ENCODE measurements at regions of chr2 and their contacts with region 1.

Region 1: GRCh38 chr2:47189635-47190034 is 34.5 kb upstream of the STPG4 start:
- DNase-seq: no peak
- H3K4me3 ChIP-seq: no peak overlapping the region
- H3K27ac ChIP-seq: peak overlapping the region in 1 of 5 donors; percentile 20
- H3K4me1 ChIP-seq: peaks cover 0 to 15% of the 10 kb centered on the region in 2 donors
- H3K27me3 ChIP-seq: no peaks in the 10 kb centered on the region
- CTCF ChIP-seq: no peak
- POLR2A ChIP-seq: no peak

Region 2: DNA sequence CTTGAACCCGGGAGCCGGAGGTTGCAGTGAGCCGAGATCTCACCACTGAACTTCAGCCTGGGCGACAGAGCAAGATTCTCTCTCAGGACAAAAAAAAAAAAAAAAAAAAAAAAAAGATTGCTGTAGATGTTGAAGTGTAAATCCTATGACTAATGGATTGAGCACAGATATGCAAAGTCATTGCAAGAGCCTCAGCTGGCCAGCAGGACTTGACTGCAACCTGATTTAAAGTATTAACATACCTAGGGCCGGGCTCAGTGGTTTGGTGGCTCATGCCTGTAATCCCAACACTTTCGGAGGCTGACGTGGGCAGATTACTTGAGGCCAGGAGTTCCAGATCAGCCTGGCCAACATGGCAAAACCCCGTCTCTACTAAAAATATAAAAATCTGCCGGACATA is 109.9 kb after region 1 on chr2:
- intact Hi-C with region 1: no loop called
- DNase-seq: peak in 4 of 7 donors; percentile 25 to 45 (median 39)
- H3K4me3 ChIP-seq: no peak overlapping the region
- H3K27ac ChIP-seq: no peak overlapping the region
- H3K4me1 ChIP-seq: peaks cover 0 to 12% of the 10 kb centered on the region in 2 donors
- H3K27me3 ChIP-seq: no peaks in the 10 kb centered on the region
- CTCF ChIP-seq: no peak
- POLR2A ChIP-seq: no peak

Region 3: DNA sequence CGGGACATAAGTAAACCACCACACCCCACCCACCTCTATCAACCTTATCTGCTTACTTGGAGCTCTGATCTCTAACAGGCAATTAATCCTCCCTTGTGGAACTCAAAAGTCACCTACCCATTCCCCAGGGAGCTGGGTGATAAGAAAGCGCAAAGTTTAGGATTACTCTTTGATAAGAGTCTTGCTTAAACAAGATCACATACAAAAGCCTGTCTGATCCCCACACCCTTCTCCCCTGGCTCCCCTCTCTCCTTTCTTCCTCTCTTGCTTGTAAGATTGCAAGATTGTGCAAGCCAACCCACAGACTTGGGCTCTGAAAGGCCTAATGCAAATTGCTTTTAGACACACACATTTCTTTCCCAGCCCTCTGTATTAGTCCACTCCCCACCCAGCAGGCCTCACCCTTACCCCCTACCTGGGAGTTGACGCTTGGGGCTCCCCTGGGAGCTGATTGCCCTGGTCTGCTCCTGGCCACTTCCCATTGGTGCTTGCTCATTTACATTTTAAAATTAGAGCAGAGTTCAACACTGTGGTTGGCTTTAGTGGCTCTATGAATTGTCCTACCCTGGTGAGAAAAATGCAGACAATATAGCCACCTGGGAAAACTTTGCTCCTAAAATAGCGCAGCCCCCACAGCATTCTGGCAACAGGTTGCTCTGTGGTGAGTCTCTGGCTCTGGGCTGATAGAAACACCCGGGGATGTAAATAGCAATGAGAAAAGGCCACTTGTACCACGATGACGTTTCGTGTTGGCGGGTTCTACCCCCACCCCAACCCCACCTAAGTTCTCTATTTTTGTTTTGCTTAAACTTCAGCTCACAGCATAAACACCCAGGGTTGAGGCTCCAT is 120.5 kb after region 1 on chr2:
- intact Hi-C with region 1: loop called in 1 of 2 experiments (anchors 10 kb)
- DNase-seq: no peak
- H3K4me3 ChIP-seq: no peak overlapping the region
- H3K27ac ChIP-seq: peak overlapping the region in 1 of 5 donors; percentile 17
- H3K4me1 ChIP-seq: peaks cover 0 to 4% of the 10 kb centered on the region in 2 donors
- H3K27me3 ChIP-seq: no peaks in the 10 kb centered on the region
- CTCF ChIP-seq: no peak
- POLR2A ChIP-seq: no peak